AG04449 (cell line): ENCODE measurements at regions of chr16 and their contacts with region 1.

Region 1: DNA sequence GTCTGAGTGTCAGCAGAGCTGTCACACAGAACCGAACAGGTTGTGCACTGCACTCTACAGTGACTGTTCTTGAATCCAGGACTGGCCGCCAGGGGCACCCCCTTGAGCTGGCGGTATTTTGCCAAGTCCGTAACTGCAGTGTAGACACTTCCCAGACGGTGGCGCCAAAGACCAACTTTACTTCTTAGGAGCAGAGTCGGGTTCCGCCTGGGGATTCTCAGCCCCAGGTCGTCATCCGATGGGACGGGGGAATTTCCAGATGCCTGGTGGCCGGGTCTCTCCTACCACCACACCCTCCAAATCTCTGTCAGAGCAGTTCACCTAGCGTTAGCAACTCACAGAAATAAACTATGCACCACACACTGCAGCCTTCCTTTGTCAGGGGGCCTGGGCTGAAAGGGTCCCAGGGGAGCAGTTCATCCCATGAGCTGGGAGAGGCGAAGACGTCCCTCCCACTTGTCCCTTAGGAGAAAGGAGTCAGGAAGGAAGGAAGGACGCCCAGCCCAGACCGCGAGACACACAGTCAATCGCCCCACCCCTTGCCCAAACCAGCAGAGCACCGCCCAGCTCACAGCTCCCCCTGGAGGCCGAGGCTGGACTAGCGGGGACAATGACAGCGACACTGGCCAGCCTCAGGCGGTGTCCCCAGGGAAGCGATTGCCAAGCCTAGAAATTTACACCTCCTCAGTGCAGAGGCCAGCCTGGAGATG is 7.4 kb upstream of the RIPOR1 start:
- DNase-seq: peak; percentile 66
- H3K4me3 ChIP-seq: peak overlapping the region; percentile 65
- CTCF ChIP-seq: peak; percentile 99

Region 2: GRCh38 chr16:67504041-67505021 is 16.9 kb before region 1 on chr16:
- CTCF ChIA-PET with region 1: interaction called, 661 read pairs
- POLR2A ChIA-PET with region 1: no interaction called
- DNase-seq: no peak
- H3K4me3 ChIP-seq: no peak overlapping the region
- CTCF ChIP-seq: no peak

Region 3: GRCh38 chr16:67555795-67556212 is 34.6 kb after region 1 on chr16:
- CTCF ChIA-PET with region 1: interaction called, 28 read pairs
- POLR2A ChIA-PET with region 1: no interaction called
- DNase-seq: no peak
- H3K4me3 ChIP-seq: no peak overlapping the region
- CTCF ChIP-seq: no peak

Region 4: DNA sequence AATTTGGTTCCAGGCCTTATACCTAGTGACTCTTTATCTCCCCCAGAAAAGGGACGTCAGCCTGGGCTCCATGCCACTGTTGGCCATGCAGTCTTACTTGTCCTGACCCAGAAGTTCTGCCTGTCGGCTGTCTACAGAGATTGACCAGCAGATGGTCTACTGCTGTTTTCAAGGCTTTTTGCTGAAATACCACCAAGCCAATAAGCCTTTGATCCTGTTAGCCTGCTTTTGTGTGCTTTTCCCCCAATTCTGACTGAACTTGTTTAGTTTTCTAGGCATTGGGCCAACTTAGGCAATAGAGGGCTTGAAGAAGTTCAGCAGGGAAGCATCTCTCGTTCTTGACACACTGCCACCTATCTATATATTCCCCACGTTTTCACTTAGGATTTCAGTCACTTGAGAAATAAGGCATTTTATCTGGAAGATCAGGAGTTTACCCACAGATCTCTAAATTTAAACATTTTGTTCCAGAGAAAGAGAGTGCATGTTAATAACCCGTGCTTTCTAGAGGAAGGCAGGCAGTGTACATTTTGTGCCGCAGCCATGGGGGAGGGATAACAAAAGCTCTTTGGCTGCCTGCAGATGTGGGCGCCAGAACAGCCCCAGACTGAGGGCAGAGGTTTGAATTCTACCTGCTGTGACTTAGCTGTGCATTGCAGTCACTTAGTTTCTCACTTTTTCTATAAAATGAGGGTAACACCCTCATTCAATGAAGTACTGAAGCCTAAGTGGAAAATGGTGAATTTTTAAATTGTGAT is 111.3 kb after region 1 on chr16:
- CTCF ChIA-PET with region 1: interaction called, 16 read pairs
- POLR2A ChIA-PET with region 1: no interaction called
- DNase-seq: peak; percentile 2
- H3K4me3 ChIP-seq: no peak overlapping the region
- CTCF ChIP-seq: no peak

Region 5: DNA sequence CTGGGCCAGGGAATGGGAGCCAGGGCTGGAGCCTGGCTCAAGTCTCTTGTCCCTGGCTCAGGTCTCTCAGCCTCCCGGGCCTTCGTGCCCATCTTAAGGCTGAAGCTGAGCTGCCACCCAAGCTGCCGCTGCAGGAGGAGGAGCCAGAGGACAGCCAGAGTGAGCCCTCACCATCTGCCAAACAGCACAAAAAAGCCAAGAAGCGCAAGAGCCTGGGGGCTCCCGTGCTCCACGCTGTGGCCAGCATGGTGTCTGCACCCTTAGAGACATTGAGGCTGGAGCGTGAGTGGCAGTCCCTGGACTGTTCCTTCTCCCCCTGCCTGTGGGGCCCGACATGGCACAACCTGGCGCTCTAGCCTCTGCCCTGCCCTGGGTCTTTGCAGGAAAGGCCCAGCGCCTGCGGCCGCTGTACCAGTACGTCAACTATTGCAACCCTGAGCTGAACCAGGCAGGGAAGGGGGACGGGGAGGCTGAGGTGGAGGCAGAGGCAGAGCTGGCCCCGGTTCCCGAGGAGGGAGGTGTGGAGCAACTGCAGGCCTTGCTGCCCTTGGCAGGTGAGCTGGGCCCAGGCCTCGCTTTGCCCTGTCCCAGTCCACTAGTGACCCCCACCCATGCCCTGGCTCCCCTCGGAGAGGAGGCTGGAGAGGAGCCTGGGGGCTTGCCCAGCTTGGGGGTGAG is 146.7 kb after region 1 on chr16:
- CTCF ChIA-PET with region 1: interaction called, 605 read pairs
- POLR2A ChIA-PET with region 1: interaction called, 11 read pairs
- DNase-seq: peak; percentile 54
- H3K4me3 ChIP-seq: peak overlapping the region; percentile 23; the same call in 1 of the 2 replicates
- CTCF ChIP-seq: peak; percentile 97

Region 6: DNA sequence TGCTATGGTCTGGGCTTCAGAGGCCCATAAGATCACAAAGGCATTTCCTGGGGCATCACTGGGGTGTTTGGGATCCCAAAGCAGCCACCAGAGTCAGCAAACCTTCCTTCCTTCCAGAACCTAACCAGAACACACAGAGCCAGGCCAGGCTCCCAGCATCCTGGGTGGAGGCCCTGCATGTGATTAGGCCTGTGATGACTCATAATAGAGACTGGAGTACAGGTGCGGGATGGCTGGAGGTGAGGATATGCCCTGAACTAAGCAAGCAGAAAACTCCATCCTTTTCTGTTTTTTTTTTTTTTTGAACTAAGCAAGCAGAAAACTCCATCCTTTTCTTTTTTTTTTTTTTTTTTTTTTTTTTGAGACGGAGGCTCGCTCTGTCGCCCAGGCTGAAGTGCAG is 215.6 kb after region 1 on chr16:
- CTCF ChIA-PET with region 1: no interaction called
- POLR2A ChIA-PET with region 1: no interaction called
- DNase-seq: no peak
- H3K4me3 ChIP-seq: no peak overlapping the region
- CTCF ChIP-seq: no peak

Region 7: GRCh38 chr16:67928561-67929364 is 407.5 kb after region 1 on chr16:
- CTCF ChIA-PET with region 1: interaction called, 17 read pairs
- POLR2A ChIA-PET with region 1: no interaction called
- DNase-seq: no peak
- H3K4me3 ChIP-seq: no peak overlapping the region
- CTCF ChIP-seq: peak; percentile 94

Region 8: DNA sequence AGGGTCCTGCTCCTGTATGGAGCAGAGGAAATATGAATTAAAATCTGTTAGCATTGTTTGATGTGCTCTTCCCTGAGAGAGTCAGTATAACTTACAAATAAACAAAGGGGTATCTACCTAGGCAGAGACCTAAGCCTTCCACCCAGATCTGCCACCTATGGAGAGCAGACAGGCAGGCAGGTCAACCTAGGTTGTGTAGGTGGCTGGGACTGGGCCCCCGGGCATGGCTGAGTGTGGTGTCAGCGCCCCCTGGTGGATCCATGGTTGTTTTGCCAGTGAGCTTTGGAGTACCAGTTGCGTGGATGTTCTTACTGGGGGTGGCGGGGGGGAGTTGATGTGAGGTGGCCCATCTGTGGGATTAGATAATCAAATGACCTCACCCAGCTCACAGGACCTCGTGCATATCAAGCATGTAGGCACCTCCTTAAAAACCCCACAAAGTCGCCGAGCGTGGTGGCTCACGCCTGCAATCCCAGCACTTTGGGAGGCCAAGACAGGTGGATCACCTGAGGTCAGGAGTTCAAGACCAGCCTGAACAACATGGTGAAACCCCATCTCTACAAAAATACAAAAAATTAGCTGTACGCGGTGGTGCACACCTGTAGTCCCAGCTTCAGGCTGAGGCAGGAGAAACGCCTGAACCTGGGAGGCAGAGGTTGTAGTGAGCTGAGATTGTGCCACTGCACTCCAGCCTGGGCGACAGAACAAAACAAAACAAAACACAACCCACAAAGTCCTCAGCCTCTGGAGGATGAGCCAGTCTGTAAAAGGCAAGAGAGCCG is 519.4 kb after region 1 on chr16:
- CTCF ChIA-PET with region 1: interaction called, 15 read pairs
- POLR2A ChIA-PET with region 1: no interaction called
- DNase-seq: no peak
- H3K4me3 ChIP-seq: no peak overlapping the region
- CTCF ChIP-seq: peak; percentile 90